Activated CD4-positive, alpha-beta T cell treated with anti-CD3 and anti-CD28 coated beads for 36 hours (primary cell): ENCODE measurements at regions of chr11 and their contacts with region 1.

Region 1: DNA sequence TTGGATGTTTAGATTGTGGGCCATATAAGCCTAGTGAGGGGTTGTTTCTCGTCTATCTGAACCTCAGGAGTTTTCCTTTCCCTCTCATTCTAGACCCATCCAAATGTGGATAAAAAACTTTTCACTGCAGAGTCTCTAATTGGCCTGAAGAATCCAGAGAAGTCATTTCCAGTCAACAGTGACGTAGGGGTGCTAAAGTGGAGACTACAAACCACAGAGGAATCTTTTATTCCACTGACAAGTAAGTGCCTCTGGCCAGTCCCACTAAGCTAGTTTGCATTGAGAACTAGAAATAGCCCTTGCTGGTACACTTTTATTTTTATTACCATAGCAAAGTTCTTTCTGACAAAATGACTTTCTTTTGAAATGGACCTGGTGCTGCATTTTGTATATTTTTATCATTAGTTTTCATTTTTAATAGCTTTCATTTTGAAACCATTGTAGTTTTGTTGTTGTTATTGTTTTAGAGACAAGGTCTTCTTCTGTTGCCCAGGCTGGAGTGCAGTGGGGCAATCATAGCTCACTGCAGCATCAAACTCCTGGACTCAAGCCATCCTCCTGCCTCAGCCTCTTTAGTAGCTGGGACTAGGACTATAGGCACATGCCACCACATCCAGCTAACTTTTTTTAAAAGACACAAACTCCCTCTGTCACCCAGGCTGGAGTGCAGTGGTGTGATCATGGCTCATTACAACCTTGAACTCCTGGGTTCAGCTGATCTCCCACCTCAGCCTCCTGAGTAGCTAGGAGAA is 14.6 kb upstream of the PHLDB1 start:
- DNase-seq: no peak
- ATAC-seq: no peak
- H3K4me3 Mint-ChIP-seq: no peak overlapping the region
- H3K27ac Mint-ChIP-seq: no peak overlapping the region
- H3K4me1 Mint-ChIP-seq: peaks cover 16% of the 10 kb centered on the region
- H3K27me3 Mint-ChIP-seq: no peaks in the 10 kb centered on the region

Region 2: GRCh38 chr11:118581057-118581456 is 11.7 kb before region 1 on chr11:
- CTCF ChIA-PET with region 1: interaction called, 19 read pairs
- POLR2A ChIA-PET with region 1: interaction called, 9 read pairs
- intact Hi-C with region 1: no loop called
- DNase-seq: no peak
- ATAC-seq: no peak
- H3K4me3 Mint-ChIP-seq: no peak overlapping the region
- H3K27ac Mint-ChIP-seq: no peak overlapping the region
- H3K4me1 Mint-ChIP-seq: peaks cover 19% of the 10 kb centered on the region
- H3K27me3 Mint-ChIP-seq: no peaks in the 10 kb centered on the region

Region 3: GRCh38 chr11:118610804-118611795 is 18.3 kb after region 1 on chr11:
- CTCF ChIA-PET with region 1: interaction called, 44 read pairs
- POLR2A ChIA-PET with region 1: interaction called, 12 read pairs
- intact Hi-C with region 1: loop called (anchors 1 kb)
- DNase-seq: peak; percentile 93
- ATAC-seq: peak; percentile 70
- H3K4me3 Mint-ChIP-seq: peak overlapping the region; percentile 72
- H3K27ac Mint-ChIP-seq: no peak overlapping the region
- H3K4me1 Mint-ChIP-seq: peaks cover 21% of the 10 kb centered on the region
- H3K27me3 Mint-ChIP-seq: peaks cover 14% of the 10 kb centered on the region

Region 4: DNA sequence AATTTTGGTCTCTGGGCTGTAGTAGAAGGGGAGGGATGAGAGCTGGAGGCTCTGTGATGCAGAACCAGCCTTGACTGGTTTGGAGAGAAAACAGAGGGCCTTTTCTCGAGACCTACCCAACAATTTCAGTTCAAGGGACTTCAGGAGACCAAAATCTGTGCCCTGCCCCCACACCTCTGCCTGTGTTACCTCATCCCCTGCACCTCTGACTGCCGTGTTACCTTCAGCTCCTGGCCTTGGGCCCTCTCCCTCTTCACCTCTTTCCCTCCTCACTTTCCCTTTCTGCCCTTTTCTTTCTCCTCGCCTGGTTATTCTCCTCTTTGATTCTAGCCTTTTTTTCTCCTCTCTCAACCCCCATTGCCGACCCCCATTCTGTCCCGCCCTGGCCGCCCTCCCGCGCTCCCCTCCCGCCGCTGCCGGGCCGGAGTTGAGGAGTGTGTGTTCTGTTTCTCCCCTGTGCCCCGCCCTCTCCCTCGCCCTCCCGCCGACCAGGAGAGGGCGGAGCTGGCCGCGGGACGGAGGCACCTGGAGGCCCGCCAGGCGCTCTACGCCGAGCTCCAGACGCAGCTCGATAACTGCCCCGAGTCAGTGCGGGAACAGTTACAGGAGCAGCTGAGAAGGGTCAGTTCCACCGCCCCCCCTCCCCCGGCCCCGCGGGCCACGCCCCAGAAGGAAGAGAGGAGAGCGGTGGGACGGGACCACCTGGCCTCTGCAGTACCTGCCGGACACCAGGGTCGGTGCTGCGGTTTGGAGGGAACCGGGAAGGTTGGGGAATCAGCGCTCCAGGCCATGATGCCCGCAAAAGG is 41.8 kb after region 1 on chr11:
- CTCF ChIA-PET with region 1: interaction called, 16 read pairs
- POLR2A ChIA-PET with region 1: interaction called, 3 read pairs
- intact Hi-C with region 1: no loop called
- DNase-seq: peak; percentile 41
- ATAC-seq: peak; percentile 51
- H3K4me3 Mint-ChIP-seq: no peak overlapping the region
- H3K27ac Mint-ChIP-seq: no peak overlapping the region
- H3K4me1 Mint-ChIP-seq: no peaks in the 10 kb centered on the region
- H3K27me3 Mint-ChIP-seq: no peaks in the 10 kb centered on the region

Region 5: DNA sequence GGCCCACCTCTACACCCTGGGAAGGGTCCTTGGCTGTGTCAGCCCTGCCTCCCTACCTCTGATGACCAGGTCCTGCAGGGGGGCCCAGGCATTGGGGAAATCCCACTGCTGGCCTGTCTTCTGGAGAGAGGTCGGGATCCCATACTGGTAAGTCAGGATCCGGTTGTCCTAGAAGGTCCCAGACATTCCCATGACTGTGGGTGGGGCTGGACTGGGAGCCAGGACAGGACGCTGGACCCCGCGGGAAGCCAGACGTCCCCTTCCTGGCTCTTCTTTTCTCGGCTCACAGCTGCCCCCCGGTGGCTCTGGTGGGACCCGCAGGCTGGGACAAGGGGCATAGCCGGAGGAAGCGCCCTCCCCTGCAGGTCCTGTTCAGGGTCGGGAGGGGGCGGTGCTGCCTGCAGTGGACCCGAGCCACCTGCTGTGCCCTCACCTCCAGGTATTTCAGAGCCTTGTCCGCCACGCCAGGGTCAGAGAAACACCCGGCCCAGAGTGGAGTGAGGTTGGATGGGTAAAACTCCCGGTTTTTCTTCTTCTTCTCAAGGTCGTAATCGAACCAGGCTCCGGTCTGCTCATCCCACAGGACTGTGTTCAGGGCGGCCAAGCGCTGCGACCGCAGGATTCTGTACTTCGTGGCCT is 66.6 kb after region 1 on chr11:
- CTCF ChIA-PET with region 1: interaction called, 32 read pairs
- POLR2A ChIA-PET with region 1: no interaction called
- intact Hi-C with region 1: loop called (anchors 1 kb)
- DNase-seq: peak; percentile 96
- ATAC-seq: peak; percentile 100
- H3K4me3 Mint-ChIP-seq: no peak overlapping the region
- H3K27ac Mint-ChIP-seq: no peak overlapping the region
- H3K4me1 Mint-ChIP-seq: no peaks in the 10 kb centered on the region
- H3K27me3 Mint-ChIP-seq: no peaks in the 10 kb centered on the region

Region 6: DNA sequence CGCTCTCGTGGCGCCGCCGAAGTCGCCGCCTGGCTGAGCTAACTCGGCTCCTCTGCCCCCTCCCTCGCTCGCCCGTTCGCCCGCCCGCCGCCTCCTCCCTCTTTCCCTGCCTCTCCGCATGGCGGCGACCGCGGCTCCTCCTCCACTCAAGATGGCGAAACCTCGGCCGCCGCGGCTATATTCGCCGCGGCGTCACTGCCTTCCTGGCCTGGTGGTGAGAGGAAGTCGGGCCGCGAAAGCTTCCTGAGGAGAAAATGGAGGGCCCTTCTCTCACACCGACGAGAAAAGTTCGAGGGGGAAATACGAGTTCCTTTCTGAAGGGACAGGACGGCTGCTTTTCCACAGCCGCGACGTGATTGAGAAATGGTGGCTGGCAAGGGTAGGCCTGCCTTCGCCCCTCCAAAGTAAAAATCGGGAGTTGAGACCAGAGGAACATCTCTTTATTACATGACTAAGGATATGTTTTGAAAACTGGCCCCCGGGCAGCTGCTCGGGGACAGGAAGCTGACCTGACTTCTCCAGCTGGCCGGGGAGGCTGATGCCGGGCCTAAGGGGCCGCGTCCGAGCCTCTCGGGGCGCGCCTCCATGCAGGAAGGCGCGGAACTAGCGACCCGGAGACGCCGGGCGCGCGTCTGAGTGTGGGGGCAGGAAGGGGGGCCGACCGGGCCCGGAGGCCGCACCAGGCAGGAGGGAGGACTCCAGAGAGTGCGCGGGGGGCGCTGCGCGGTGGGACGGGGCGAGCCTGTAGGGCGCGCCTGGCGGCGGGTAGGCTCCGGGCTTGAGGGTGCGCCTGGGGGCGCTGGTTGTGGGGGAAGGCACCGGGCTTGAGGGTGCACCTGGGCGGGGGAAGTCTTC is 198.5 kb after region 1 on chr11 and contains the start of gene DDX6:
- CTCF ChIA-PET with region 1: no interaction called
- POLR2A ChIA-PET with region 1: no interaction called
- intact Hi-C with region 1: no loop called
- DNase-seq: peak; percentile 96
- ATAC-seq: peak; percentile 47
- H3K4me3 Mint-ChIP-seq: peak within 1 kb of the TSS; percentile 87
- H3K27ac Mint-ChIP-seq: peak within 1 kb of the TSS; percentile 93
- H3K4me1 Mint-ChIP-seq: peaks cover 26% of the 10 kb centered on the region
- H3K27me3 Mint-ChIP-seq: no peaks in the 10 kb centered on the region
- total RNA-seq, gene DDX6: 175 to 178 TPM

Region 7: DNA sequence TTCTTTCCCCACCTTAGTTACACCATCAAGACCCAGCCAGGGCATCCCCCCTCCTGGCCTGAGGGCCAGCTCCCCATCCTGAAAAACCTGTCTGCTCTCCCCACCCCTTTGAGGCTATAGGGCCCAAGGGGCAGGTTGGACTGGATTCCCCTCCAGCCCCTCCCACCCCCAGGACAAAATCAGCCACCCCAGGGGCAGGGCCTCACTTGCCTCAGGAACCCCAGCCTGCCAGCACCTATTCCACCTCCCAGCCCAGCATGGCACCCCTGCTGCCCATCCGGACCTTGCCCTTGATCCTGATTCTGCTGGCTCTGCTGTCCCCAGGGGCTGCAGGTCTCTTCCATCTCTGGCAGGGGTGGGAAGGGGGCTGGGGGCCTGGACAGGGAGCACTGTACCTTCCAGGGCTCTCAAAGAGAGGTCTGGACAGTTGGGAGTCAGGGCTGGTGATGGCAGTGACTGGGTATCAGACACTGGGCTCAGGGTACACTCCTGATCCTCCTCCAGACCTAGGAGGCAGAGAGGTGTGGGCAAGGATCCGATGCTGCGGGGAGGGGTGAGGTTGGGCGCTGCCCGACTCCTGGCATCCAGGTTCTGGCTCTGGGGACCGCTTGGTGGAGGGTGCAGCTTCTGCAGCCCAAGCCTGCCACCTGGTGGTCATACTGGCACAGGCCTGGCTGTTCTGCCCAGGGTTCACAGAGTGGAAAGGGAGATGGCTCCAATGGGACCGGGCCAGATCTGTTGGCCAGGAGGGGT is 363.5 kb after region 1 on chr11 and contains the start of gene UPK2:
- CTCF ChIA-PET with region 1: interaction called, 3 read pairs
- POLR2A ChIA-PET with region 1: no interaction called
- intact Hi-C with region 1: loop called in 1 of 2 experiments (anchors 1 kb)
- DNase-seq: peak; percentile 95
- ATAC-seq: peak; percentile 100
- H3K4me3 Mint-ChIP-seq: no peak within 1 kb of the TSS
- H3K27ac Mint-ChIP-seq: peak within 1 kb of the TSS; percentile 0
- H3K4me1 Mint-ChIP-seq: peaks cover 5% of the 10 kb centered on the region
- H3K27me3 Mint-ChIP-seq: no peaks in the 10 kb centered on the region
- total RNA-seq, gene UPK2: 0.19 to 0.32 TPM